Breast epithelium (tissue), 4 donors: ENCODE measurements at regions of chr10 and their contacts with region 1.

Region 1: DNA sequence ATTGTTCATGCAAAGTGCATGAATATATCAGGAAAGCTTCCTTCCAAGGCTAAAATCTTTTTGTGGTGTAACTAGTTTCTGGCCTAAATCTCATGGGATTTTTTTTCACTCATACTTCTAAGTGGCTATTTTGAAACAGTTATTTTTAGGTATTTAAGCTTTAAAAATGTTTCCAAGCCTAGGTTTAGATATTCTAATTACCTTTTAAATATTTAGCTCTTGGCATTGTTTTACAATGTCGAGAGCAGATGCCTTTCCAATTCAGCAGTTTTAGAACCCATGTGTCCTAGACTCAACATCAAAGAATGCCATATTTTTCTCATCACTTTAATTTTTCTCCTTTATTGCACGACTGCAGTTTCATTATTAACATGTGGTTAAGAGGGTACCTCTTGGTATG is 27.1 kb upstream of the STOX1 start:
- DNase-seq: no peak
- H3K4me3 ChIP-seq: no peak overlapping the region
- H3K27ac ChIP-seq: no peak overlapping the region
- H3K4me1 ChIP-seq: no peaks in the 10 kb centered on the region
- H3K27me3 ChIP-seq: no peaks in the 10 kb centered on the region
- CTCF ChIP-seq: no peak
- POLR2A ChIP-seq: no peak

Region 2: GRCh38 chr10:68628576-68629127 is 171.5 kb before region 1 on chr10:
- intact Hi-C with region 1: no loop called
- DNase-seq: no peak
- H3K4me3 ChIP-seq: no peak overlapping the region
- H3K27ac ChIP-seq: no peak overlapping the region
- H3K4me1 ChIP-seq: no peaks in the 10 kb centered on the region
- H3K27me3 ChIP-seq: no peaks in the 10 kb centered on the region
- CTCF ChIP-seq: no peak
- POLR2A ChIP-seq: no peak

Region 3: DNA sequence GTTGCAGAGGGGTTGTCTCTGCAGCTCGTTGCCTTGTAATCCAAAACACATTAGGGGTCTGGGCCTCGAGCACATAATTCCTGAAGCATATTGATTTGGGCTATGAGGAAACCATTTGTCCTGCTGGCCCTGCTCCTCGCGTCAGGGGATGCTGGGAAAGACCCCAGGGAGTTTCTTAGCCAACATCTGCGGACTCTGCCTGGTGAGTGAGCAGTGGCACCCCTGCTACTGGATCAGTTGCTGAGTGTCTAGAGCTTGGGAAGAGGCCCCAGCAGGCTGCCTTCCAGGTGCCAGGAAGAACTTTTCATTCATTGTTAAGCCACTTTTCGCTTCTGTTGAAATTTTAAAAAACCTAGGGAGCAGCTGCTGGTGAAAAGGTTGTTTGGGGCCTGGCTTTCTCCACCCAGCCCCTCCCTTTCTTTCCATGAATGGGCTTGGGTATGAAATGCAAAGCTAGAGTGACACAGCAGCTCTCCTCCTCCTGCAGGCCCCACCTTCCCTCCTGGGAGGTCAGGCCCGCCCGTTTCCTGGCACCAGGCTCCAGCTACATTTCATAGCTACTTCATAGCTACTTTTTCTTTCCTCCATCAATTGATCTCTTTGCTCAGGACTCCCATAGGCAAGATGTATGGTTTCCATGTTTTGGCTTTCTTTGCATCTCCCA is 589.8 kb after region 1 on chr10:
- intact Hi-C with region 1: loop called (anchors 5 kb)
- DNase-seq: no peak
- H3K4me3 ChIP-seq: no peak overlapping the region
- H3K27ac ChIP-seq: no peak overlapping the region
- H3K4me1 ChIP-seq: no peaks in the 10 kb centered on the region
- H3K27me3 ChIP-seq: no peaks in the 10 kb centered on the region
- CTCF ChIP-seq: no peak
- POLR2A ChIP-seq: no peak